HEK293 (cell line): ENCODE measurements at regions of chr7 and their contacts with region 1.

Region 1: DNA sequence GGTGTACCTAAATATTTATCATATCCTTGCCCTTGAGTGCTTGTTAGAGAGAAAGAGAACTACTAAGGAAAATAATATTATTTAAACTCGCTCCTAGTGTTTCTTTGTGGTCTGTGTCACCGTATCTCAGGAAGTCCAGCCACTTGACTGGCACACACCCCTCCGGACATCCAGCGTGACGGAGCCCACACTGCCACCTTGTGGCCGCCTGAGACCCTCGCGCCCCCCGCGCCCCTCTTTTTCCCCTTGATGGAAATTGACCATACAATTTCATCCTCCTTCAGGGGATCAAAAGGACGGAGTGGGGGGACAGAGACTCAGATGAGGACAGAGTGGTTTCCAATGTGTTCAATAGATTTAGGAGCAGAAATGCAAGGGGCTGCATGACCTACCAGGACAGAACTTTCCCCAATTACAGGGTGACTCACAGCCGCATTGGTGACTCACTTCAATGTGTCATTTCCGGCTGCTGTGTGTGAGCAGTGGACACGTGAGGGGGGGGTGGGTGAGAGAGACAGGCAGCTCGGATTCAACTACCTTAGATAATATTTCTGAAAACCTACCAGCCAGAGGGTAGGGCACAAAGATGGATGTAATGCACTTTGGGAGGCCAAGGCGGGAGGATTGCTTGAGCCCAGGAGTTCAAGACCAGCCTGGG is 11.4 kb downstream of the SERPINE1 start:
- H3K4me3 ChIP-seq: peak overlapping the region; percentile 30
- H3K27ac ChIP-seq: no peak overlapping the region; the same call in 1 of the 2 replicates
- H3K4me1 ChIP-seq: 0 out of 2 replicates have a peak, but pooled peaks cover 5% of the 10 kb centered on the region
- CTCF ChIP-seq: peak; percentile 74; the same call in 1 of the 2 replicates

Region 2: GRCh38 chr7:100456558-100456957 is 681.8 kb before region 1 on chr7:
- CTCF ChIA-PET with region 1: no interaction called
- POLR2A ChIA-PET with region 1: no interaction called
- H3K4me3 ChIP-seq: no peak overlapping the region
- H3K27ac ChIP-seq: no peak overlapping the region
- H3K4me1 ChIP-seq: no peaks in the 10 kb centered on the region
- CTCF ChIP-seq: no peak

Region 3: DNA sequence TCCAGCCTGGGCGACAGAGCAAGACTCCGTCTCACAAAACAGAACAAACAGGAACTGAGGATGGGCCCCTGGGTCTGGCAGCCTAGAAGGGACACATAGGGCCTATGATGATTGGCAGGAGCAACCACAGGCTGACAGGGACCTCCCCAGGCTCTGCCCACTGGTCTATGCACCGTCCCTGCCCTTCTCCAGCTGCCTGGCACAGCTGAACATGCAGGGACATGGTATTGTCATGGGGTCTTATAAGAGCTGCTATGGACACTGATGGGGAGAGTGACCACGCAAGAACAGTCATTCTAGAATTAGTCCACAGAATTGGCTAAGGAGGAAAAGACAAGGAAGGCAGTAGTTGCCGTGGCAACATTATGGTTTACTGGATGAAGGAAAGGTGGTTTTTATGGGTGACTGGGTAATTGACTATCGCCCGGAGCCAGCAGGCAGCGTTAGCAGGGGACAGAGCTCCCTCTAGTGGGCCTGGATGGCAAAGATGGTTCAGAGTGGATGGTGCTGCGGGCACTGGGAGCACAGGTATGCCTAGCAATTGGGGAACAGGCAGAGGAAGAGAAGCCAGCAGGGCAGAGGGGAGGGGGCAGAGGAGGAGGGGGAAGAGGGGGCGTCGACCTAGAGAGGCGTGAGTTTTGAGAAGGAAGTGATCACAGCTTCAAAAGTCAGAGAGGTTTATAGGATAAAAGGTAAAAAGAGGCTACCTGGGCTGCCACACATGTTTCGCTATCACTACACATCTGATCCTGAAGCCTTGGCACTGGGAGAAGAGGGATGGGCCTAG is 60.8 kb before region 1 on chr7:
- CTCF ChIA-PET with region 1: interaction called, 10 read pairs
- POLR2A ChIA-PET with region 1: no interaction called
- H3K4me3 ChIP-seq: no peak overlapping the region
- H3K27ac ChIP-seq: no peak overlapping the region
- H3K4me1 ChIP-seq: no peaks in the 10 kb centered on the region
- CTCF ChIP-seq: peak; percentile 97

Region 4: GRCh38 chr7:101126651-101127280 is 11.6 kb before region 1 on chr7 and contains the start of gene SERPINE1:
- CTCF ChIA-PET with region 1: interaction called, 37 read pairs
- POLR2A ChIA-PET with region 1: interaction called, 4 read pairs
- H3K4me3 ChIP-seq: peak within 1 kb of the TSS; percentile 4; the same call in 1 of the 2 replicates
- H3K27ac ChIP-seq: no peak within 1 kb of the TSS
- H3K4me1 ChIP-seq: no peaks in the 10 kb centered on the region; the same call in 1 of the 2 replicates
- CTCF ChIP-seq: peak; percentile 39; the same call in 1 of the 2 replicates

Region 5: DNA sequence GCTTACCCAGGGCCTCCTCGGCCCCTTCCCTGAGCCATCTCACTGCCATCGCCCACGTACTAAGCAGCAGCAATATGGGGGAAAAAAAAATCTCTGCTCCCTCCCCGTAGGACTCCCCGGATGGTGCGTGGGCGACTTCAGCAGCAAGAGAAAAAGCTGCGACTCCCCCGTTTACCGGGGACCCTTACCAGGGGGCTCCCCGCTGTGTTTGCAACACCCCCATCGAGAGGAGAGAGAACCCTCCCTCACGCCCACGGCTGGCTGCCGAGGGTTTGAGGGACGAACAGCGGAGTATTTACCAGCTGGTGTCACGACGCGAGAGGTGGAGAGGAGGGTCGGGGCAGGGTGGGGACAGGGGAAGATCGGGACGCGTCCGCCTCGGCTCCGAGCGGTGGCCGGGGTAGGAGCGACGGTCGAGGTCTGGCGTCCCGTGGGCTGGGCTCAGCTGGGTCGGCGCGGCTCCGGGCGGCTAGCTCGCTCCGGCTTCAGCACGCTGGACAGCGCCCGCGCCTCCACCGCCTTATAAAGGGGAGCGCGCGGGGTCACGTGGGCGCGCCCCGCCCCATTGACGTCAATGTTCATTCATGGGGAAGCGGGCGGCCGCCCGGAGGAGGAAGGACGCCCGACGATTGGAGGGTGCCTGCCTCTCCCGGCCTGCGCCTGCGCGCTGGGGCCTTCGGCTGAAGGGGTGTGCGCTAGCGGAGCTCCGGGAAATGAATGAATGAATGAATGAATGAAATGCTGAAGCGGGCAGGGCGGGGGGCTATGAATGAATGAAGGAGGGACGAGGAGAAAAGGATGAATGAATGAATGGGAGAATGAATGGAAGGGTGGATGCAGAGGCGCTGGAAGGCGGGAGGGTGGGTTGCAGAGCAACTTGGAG is 27.0 kb after region 1 on chr7 and contains the start of gene VGF:
- CTCF ChIA-PET with region 1: interaction called, 40 read pairs
- POLR2A ChIA-PET with region 1: interaction called, 3 read pairs
- H3K4me3 ChIP-seq: peak within 1 kb of the TSS; percentile 15
- H3K27ac ChIP-seq: no peak within 1 kb of the TSS
- H3K4me1 ChIP-seq: peaks cover 18% of the 10 kb centered on the region
- CTCF ChIP-seq: no peak

Region 6: GRCh38 chr7:101185258-101185839 is 47.0 kb after region 1 on chr7:
- CTCF ChIA-PET with region 1: interaction called, 131 read pairs
- POLR2A ChIA-PET with region 1: no interaction called
- H3K4me3 ChIP-seq: no peak overlapping the region
- H3K27ac ChIP-seq: no peak overlapping the region
- H3K4me1 ChIP-seq: no peaks in the 10 kb centered on the region
- CTCF ChIP-seq: no peak

Region 7: GRCh38 chr7:101244375-101245146 is 106.2 kb after region 1 on chr7 and contains the start of gene FIS1:
- CTCF ChIA-PET with region 1: interaction called, 40 read pairs
- POLR2A ChIA-PET with region 1: interaction called, 8 read pairs
- H3K4me3 ChIP-seq: peak within 1 kb of the TSS; percentile 73
- H3K27ac ChIP-seq: peak within 1 kb of the TSS; percentile 53
- H3K4me1 ChIP-seq: peaks cover 2% of the 10 kb centered on the region; the same call in 1 of the 2 replicates
- CTCF ChIP-seq: peak; percentile 93

Region 8: GRCh38 chr7:101390901-101391301 is 252.6 kb after region 1 on chr7:
- CTCF ChIA-PET with region 1: no interaction called
- POLR2A ChIA-PET with region 1: no interaction called
- H3K4me3 ChIP-seq: no peak overlapping the region
- H3K27ac ChIP-seq: no peak overlapping the region
- H3K4me1 ChIP-seq: 0 out of 2 replicates have a peak, but pooled peaks cover 2% of the 10 kb centered on the region
- CTCF ChIP-seq: no peak